Right cardiac atrium (tissue), 5 donors: ENCODE measurements at regions of chr2 and their contacts with region 1.

Region 1: GRCh38 chr2:164479460-164479859 is 141.8 kb downstream of the GRB14 start:
- DNase-seq: peak; percentile 17 to 48 (median 37)
- ATAC-seq: no peak
- H3K4me3 ChIP-seq: no peak overlapping the region
- H3K27ac ChIP-seq: no peak overlapping the region
- H3K4me1 ChIP-seq: no peaks in the 10 kb centered on the region
- H3K27me3 ChIP-seq: no peaks in the 10 kb centered on the region

Region 2: DNA sequence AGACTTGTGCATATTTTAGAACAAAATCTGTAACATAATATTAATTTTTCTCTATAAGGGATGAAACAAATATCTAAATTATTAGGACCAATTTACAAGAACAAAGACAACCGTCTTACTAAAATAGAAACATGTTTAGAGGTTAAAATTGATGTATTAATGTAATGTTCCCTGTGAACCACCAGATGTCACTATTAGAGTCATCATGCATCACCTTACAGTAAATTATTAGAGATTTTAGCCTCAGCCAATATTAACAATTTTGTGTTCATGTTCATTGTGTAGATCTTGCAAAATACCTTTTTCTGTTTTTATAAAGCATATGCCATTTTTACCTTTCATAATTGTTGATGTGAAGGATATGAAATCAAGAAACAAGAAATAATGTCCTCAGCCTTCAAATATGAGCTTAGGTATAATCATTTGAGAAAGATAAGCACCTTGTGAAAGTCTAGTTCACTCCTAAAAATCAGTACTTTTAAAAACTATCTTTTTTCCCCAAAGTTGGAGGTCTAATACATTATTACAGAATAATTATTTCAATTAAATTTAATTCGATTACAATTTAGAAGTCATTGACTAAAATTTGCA is 1296.6 kb before region 1 on chr2:
- intact Hi-C with region 1: loop called in 1 of 4 experiments (anchors 10 kb)
- DNase-seq: no peak
- ATAC-seq: no peak
- H3K4me3 ChIP-seq: no peak overlapping the region
- H3K27ac ChIP-seq: no peak overlapping the region
- H3K4me1 ChIP-seq: no peaks in the 10 kb centered on the region
- H3K27me3 ChIP-seq: no peaks in the 10 kb centered on the region